HEK293T (cell line): ENCODE measurements at regions of chr1 and their contacts with region 1.

Region 1: GRCh38 chr1:168342572-168343280 is 62.0 kb downstream of the TBX19 start:
- DNase-seq: peak; percentile 83

Region 2: DNA sequence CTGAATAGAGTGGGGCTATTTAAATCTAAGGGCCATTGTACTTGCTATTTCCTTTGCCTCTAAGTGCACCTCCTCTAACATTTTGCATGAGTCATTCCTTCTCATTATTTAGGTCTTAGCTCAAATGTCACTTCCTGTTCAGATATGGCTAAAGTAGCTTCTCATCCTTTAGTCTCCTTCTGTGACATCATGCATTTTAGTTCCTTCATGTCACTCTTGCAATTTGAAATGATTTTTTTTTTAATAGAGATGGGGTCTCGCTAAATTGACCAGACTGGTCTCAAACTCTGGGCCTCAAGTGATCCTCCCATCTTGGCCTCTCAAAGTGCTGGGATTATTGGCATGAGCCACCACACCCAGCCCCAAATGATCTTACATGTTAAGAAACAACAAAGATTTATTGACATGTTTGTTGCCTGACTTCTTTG is 55.5 kb before region 1 on chr1:
- CTCF ChIA-PET with region 1: no interaction called
- POLR2A ChIA-PET with region 1: no interaction called
- DNase-seq: no peak

Region 3: DNA sequence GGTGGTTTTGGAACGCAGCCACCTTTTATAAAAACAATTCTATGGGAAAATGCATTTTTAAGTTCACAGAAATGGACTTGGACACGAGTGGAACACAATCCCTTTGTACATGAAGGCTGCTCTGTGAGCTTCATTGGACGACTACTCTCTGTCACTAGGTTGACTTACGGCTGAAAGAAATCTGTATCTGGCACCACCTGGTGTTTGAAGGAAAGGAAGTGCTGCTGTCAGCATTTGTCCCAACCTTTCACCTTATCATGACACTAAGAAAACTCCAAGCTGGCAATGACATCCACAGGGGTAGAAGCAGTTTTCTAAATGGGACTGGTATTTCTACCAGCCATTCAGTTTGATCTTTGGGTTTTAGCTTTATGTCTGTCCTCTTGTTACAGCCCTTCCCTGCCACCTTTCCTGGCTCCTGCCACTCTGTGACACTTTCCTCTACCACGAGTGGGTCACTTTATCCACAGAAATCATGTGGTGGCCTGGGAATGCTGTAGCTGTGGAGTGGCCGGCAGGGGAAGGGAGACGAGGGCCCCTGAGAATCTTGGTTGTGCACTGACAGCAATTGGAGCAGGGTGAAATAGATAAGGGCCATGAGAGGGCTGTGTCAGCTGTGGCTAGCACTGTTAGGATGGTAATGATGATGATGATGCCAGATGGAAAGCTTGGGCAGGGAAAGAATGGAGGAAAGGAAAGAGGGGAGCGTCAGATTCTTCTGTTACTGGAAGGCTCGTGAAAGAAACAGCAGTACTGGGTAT is 23.2 kb after region 1 on chr1:
- CTCF ChIA-PET with region 1: interaction called, 19 read pairs
- POLR2A ChIA-PET with region 1: no interaction called
- DNase-seq: no peak

Region 4: GRCh38 chr1:168439456-168440375 is 97.0 kb after region 1 on chr1:
- CTCF ChIA-PET with region 1: interaction called, 17 read pairs
- POLR2A ChIA-PET with region 1: no interaction called
- DNase-seq: peak; percentile 83